Aorta (tissue), 5 donors: ENCODE measurements at regions of chr19 and their contacts with region 1.

Region 1: DNA sequence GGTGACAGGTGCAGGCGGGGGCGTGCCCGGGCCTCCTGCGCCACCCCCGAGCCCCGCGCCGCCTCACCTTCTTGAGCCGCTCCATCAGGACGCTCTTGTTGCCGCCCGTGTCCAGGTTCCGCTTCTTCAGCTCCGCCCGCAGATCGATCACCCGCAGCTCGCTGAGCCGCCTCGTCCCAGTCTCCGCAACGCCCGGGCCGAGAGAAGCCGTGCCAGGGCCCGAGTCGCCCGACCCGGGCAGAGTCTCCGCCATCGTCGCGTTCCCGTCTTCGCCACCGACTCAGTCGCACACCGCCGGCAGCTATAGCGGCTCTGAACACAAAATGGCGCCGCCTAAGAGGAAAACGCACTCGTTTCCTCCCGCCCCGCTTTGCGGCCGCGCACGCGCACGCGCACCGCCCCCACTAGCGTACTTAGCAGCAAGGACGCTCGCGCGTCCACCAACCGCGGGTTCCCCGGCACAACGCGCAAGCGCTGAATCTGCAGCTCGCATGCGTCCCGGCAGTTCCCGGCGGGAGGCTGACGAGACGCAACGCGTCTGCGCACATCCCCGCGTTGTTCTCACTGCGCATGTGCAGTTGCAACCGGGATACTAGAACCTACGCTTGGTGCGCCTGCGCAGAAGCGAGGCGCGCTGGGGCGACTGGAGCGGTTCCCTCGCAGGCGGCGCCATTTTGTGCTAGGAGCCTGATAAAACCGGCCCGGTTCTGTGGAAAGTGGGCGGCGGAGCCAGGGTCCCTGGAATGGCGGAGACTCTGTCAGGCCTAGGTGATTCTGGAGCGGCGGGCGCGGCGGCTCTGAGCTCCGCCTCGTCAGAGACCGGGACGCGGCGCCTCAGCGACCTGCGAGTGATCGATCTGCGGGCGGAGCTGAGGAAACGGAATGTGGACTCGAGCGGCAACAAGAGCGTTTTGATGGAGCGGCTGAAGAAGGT is at the starts of genes SAFB and SAFB2:
- DNase-seq: peak; percentile 100
- ATAC-seq: peak; percentile 98
- H3K4me3 ChIP-seq: peak within 1 kb of the TSS; percentile 95
- H3K27ac ChIP-seq: peak within 1 kb of the TSS; percentile 84 to 92
- H3K4me1 ChIP-seq: peaks cover 0 to 5% of the 10 kb centered on the region in 2 donors
- H3K27me3 ChIP-seq: no peaks in the 10 kb centered on the region
- total RNA-seq, gene SAFB: 79.3 to 100 TPM
- total RNA-seq, gene SAFB2: 67.1 to 113 TPM

Region 2: GRCh38 chr19:4065430-4066175 is 1557.1 kb before region 1 on chr19:
- intact Hi-C with region 1: no loop called
- DNase-seq: peak; percentile 98
- ATAC-seq: peak; percentile 91
- H3K4me3 ChIP-seq: peak overlapping the region; percentile 97 to 98
- H3K27ac ChIP-seq: peak overlapping the region in 1 of 2 donors; percentile 69
- H3K4me1 ChIP-seq: no peaks in the 10 kb centered on the region
- H3K27me3 ChIP-seq: no peaks in the 10 kb centered on the region

Region 3: DNA sequence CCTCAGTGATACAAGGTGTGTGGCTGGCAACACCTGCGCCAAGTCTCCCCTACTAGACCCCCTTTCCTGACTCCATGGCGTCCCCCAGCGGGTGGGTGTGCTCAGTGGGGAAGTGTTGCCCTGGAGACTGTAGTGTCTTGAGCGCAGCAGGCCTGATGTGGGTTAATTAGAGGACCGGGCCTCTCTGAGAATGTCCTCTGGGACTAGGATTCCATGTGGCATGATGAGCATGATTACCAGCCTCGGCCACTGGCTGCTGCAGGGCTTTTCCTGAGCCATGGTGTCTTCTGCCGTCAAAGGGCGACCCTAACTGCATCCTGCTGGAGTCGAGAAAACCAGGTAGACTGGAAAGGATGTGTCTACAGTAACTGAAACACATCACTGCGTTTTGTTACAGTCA is 29.5 kb after region 1 on chr19:
- intact Hi-C with region 1: no loop called
- DNase-seq: no peak
- ATAC-seq: no peak
- H3K4me3 ChIP-seq: no peak overlapping the region
- H3K27ac ChIP-seq: no peak overlapping the region
- H3K4me1 ChIP-seq: no peaks in the 10 kb centered on the region
- H3K27me3 ChIP-seq: no peaks in the 10 kb centered on the region

Region 4: DNA sequence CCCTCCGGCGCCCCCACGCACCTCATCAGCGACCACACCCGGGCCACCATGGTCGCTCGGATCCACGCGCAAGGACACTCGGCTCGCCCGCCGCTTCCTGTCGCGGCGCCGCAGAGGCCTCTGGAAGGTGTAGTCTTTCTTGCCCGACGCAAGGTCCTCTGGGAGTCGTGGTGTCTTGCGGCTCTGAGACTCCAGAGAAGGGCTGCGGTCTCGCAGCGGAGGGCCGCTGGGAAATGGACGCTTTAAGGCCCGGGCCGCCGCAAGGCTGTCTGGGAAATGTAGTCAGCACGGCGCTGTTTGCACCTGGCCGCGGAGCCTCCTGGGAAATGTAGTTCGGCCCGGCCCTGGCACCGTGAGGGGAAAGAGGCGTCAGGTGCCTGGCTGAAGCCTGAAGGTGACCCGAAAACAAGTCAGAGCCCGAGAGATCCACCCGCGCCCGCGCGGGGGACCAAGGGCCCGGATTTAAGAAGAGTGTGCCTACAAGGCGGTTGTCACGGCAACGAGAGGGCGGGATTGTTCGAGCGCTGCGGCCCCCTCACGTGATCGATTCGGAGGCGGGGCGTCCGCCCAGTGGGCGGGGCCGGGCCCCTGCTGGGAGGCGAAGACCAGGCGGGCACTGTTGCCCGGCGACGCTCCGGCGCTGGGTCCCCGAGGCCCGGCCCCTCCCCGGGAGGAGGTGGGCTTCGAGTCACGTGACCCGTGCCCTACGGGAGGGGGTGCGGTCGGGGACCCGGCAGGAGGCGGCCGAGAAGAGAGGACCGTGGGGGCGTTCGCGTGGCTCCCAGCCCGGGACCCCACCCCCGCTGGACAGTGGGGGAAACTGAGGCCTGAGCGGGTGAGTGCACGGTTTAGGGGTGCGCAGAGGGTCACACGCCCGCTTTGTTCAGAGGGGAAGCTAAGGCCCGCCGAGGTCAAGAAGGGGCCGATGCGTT is 58.0 kb after region 1 on chr19 and contains the starts of genes HSD11B1L and MICOS13:
- intact Hi-C with region 1: loop called in 1 of 2 experiments (anchors 5 kb)
- DNase-seq: peak; percentile 99
- ATAC-seq: peak; percentile 98
- H3K4me3 ChIP-seq: peak within 1 kb of the TSS; percentile 61 to 64
- H3K27ac ChIP-seq: peak within 1 kb of the TSS in 1 of 2 donors; percentile 60
- H3K4me1 ChIP-seq: no peaks in the 10 kb centered on the region
- H3K27me3 ChIP-seq: no peaks in the 10 kb centered on the region
- total RNA-seq, gene HSD11B1L: 3.9 to 5.7 TPM
- total RNA-seq, gene MICOS13: 35.4 to 39.0 TPM

Region 5: GRCh38 chr19:5719961-5720790 is 97.4 kb after region 1 on chr19 and contains the starts of genes CATSPERD and LONP1:
- intact Hi-C with region 1: loop called in 1 of 2 experiments (anchors 5 kb)
- DNase-seq: peak; percentile 99
- ATAC-seq: peak; percentile 99
- H3K4me3 ChIP-seq: peak within 1 kb of the TSS; percentile 67 to 97
- H3K27ac ChIP-seq: peak within 1 kb of the TSS; percentile 62 to 77
- H3K4me1 ChIP-seq: peaks cover 0 to 6% of the 10 kb centered on the region in 2 donors
- H3K27me3 ChIP-seq: no peaks in the 10 kb centered on the region
- total RNA-seq, gene CATSPERD: not detected
- total RNA-seq, gene LONP1: 40.3 to 46.4 TPM

Region 6: DNA sequence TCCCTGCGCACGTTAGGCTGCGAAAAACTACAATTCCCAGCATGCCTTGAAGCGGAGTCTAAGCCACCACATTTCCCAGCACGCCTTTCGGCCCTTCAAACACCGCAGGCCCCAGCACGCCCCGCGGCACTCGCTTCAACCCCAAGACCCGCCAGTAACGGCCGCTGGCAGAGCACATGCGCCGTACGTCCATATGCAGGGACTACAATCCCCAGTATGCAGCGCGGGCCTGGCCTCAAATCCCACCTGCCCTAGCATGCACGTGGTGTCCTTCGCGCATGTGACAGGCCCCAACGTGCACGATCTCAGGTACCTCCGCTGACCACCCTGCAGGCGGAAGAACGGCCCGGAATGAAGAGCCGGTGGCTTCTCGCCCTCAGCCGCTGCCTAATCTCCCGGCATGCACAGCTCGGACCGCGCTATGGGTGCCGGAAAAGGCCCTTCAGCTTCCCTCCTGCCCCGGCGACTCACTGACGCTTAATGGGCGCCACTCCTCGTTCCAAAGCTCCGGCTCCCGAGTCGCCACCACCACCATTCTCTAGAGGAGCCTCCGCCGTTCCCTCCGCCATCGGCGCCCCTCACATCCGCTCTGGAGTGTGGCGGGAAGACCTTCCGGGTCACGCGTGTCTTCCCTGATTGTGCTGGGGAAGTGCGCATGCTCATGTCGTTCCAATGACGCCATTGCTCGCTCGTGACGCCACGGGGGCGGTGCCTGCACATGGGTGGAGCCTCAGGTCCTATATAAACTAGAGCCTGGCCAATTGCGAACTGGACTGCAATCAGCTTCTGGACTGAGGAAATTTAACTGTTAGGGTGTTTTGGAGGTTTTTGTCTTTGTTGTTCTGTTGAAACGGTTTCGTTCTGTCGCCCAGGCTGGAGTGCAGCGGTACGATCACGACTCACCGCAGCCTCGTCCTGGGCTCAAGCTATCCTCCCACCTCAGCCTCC is 168.1 kb after region 1 on chr19 and contains the start of gene DUS3L:
- intact Hi-C with region 1: loop called in 1 of 2 experiments (anchors 10 kb)
- DNase-seq: peak; percentile 98
- ATAC-seq: peak; percentile 97
- H3K4me3 ChIP-seq: peak within 1 kb of the TSS; percentile 34 to 65
- H3K27ac ChIP-seq: peak within 1 kb of the TSS in 1 of 2 donors; percentile 82
- H3K4me1 ChIP-seq: no peaks in the 10 kb centered on the region
- H3K27me3 ChIP-seq: peaks cover 0 to 1% of the 10 kb centered on the region in 2 donors
- total RNA-seq, gene DUS3L: 25.6 to 27.6 TPM